ENCODE measurements at regions of chr10 and their contacts with region 1.

Region 1: GRCh38 chr10:32005050-32005449 is 51.2 kb downstream of the KIF5B start:
- DNase-seq: peak; percentile 39 to 70
- ATAC-seq: peak; percentile 87 to 90
- H3K4me3 ChIP-seq: no peak overlapping the region
- H3K27ac ChIP-seq: no peak overlapping the region
- H3K4me1 ChIP-seq: no peaks in the 10 kb centered on the region
- CTCF ChIP-seq: peak; percentile 65
- EP300 ChIP-seq: no peak
- POLR2A ChIP-seq: no peak
- RAD21 ChIP-seq: peak; percentile 64 to 67

Region 2: DNA sequence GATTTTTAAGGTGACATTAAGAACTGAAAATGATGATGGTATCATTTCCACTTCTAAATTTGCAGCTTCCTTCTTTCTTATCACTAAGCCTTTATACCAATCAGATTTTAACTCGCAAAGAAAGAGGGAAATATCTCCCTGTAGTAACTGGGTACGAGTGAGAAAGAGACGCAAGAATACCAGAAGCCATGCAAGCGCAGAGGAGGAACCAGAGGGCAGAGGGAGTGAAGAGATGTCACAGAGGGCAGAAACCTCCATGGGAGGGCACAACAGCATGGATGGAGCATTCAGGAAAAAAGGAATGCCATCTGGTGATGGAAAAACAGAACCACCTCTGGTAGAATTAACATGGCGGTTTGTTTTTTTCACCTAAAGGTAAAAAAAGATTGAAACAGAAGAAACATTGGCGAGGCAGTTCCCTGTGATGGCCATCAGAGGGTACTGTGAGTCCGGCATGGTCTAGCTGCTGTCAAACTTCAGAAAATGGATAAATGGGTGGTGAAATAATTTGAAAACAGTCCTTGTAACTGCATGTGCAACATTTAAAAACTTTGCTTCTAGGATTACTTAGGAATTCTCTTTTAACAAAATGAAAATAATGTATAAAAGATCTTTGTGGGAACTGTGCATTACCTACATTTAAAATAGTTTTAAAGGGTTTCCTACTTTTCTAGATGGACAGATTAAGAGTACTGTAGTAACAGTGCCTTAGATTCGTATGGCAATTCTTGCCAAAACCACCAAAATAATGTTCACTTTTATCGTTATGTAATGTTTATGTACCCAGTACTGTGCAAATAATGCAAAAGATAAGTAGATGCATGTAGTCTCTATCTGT is 168.3 kb before region 1 on chr10:
- CTCF ChIA-PET with region 1: interaction called, 28 read pairs
- POLR2A ChIA-PET with region 1: no interaction called
- DNase-seq: peak; percentile 36 to 68
- ATAC-seq: peak; percentile 89 to 93
- H3K4me3 ChIP-seq: no peak overlapping the region
- H3K27ac ChIP-seq: no peak overlapping the region
- H3K4me1 ChIP-seq: no peaks in the 10 kb centered on the region
- CTCF ChIP-seq: peak; percentile 85
- EP300 ChIP-seq: no peak
- POLR2A ChIP-seq: no peak
- RAD21 ChIP-seq: peak; percentile 88 to 90

Region 3: DNA sequence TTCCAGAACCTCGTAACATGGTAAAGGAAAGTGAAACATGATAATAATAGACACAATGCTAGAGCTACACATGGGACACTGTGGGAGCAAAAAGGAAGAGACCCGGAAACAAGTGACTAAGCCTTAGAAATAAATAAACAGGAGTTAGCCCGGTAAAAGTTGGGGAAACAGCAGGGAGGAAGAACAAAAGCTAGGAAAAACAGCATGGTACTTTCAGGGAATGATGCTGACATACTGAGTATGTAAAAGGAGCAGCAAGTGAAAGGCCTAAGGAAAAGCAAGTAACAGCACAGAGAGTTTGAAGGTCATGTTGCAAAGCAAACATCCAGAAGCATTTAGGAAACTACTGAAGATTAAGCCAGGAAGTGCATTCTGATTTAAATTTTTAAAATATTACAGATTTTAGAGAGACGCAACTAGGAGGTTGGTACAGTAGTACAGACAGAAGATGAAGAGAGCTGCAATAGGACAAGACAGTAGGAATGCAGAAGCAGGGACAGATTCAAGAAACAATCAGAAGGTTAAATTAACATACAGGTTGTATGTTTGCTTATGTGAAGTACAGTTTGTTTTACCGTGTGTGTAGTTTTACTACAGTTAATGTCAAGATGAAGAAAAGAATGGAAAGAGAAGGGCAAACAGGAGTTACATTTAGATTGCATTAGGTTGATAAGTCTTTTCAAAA is 140.1 kb before region 1 on chr10:
- CTCF ChIA-PET with region 1: interaction called, 49 read pairs
- POLR2A ChIA-PET with region 1: no interaction called
- DNase-seq: peak; percentile 23 to 44
- ATAC-seq: peak in 1 of 2 experiments; percentile 59; a peak in 3 of 6 replicates
- H3K4me3 ChIP-seq: peak overlapping the region; percentile 33
- H3K27ac ChIP-seq: peak overlapping the region; percentile 77 to 90
- H3K4me1 ChIP-seq: peaks cover 71% of the 10 kb centered on the region
- CTCF ChIP-seq: no peak
- EP300 ChIP-seq: no peak
- POLR2A ChIP-seq: no peak
- RAD21 ChIP-seq: no peak

Region 4: DNA sequence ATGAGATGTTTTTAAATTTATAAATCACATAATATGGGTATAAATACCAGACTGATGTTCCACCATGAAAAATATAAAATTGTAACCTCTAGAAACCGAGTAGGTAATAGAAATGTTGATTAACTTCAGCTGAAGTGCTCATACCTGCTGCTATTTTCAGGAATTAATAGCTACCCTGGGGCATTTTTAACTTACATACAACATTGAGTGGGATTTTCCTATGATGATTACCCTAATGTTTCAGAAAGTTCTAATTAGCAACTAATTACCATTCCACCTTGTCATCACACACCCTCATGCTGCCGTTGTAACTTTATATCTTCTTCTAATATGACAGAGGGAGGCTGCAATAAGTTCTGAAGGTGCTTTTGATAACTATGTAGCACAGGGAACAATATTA is 22.9 kb before region 1 on chr10:
- CTCF ChIA-PET with region 1: interaction called, 14 read pairs
- POLR2A ChIA-PET with region 1: no interaction called
- DNase-seq: no peak
- ATAC-seq: no peak
- H3K4me3 ChIP-seq: no peak overlapping the region
- H3K27ac ChIP-seq: no peak overlapping the region
- H3K4me1 ChIP-seq: peaks cover 13% of the 10 kb centered on the region
- CTCF ChIP-seq: no peak
- EP300 ChIP-seq: no peak
- POLR2A ChIP-seq: no peak
- RAD21 ChIP-seq: no peak

Region 5: GRCh38 chr10:31994926-31995325 is 10.1 kb before region 1 on chr10:
- CTCF ChIA-PET with region 1: interaction called, 12 read pairs
- POLR2A ChIA-PET with region 1: no interaction called
- DNase-seq: no peak
- ATAC-seq: no peak
- H3K4me3 ChIP-seq: no peak overlapping the region
- H3K27ac ChIP-seq: no peak overlapping the region
- H3K4me1 ChIP-seq: 0 out of 3 replicates have a peak, but pooled peaks cover 3% of the 10 kb centered on the region
- CTCF ChIP-seq: no peak
- EP300 ChIP-seq: no peak
- POLR2A ChIP-seq: no peak
- RAD21 ChIP-seq: no peak

Region 6: DNA sequence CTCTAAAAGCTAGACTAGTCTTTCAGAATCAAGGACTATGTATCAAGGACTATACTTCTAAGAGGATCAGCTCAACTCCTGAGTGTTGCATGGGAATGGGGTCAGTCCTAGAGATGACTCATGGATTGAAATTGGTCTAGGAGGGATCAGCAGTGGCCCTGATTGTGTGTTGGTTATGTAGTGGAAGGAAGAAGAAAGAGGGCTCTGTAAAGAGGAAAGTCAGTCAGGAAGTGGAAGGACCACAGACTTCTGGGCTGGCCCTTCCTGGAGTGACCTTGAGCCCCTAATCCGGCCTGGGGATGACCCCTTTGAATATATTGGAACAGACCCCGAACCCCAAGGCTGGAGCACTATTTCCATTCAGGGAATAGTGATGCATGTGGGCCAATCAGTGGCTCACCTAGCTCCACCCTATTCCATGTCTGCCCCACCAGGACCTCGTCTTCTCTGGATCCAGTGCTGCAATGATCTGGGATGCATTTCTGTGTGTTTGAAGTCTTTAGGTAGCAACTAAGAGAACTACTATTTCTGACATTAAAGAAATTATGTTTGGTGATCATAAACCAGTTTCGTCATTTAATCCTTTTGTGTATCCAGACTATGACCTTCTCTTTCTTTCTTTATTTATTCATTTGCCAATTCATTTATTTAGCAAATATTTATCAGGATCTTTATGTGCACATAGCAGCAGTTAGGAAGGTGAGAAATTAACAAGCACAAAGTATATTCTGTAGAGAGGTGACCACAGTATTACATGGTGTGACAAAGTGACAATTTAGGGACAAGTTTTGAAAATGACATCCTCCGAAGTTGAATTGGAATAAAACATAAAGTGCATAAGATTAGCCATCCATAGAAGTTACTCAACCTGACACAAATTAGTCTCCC is 99.8 kb after region 1 on chr10:
- CTCF ChIA-PET with region 1: no interaction called
- POLR2A ChIA-PET with region 1: no interaction called
- DNase-seq: no peak
- ATAC-seq: no peak
- H3K4me3 ChIP-seq: no peak overlapping the region
- H3K27ac ChIP-seq: no peak overlapping the region
- H3K4me1 ChIP-seq: no peaks in the 10 kb centered on the region
- CTCF ChIP-seq: no peak
- EP300 ChIP-seq: no peak
- POLR2A ChIP-seq: no peak
- RAD21 ChIP-seq: no peak